ENCODE measurements at regions of chr5 and their contacts with region 1.

Region 1: GRCh38 chr5:96807075-96807654 is 580 bp downstream of the ERAP1 start:
- DNase-seq: no peak
- H3K4me3 ChIP-seq: peak overlapping the region; percentile 68
- H3K4me3 Mint-ChIP-seq: peak overlapping the region; percentile 96 to 99 (median 98)
- H3K27ac ChIP-seq: peak overlapping the region; percentile 93
- H3K27ac Mint-ChIP-seq: peak overlapping the region; percentile 97 to 100 (median 99)
- H3K4me1 ChIP-seq: peaks cover 68% of the 10 kb centered on the region
- H3K4me1 Mint-ChIP-seq: peaks cover 60 to 80% (median 77%) of the 10 kb centered on the region in 3 donors
- H3K27me3 ChIP-seq: no peaks in the 10 kb centered on the region
- H3K27me3 Mint-ChIP-seq: peaks cover 0 to 5% of the 10 kb centered on the region in 2 donors

Region 2: GRCh38 chr5:96565582-96566265 is 241.4 kb before region 1 on chr5:
- CTCF ChIA-PET with region 1: no interaction called
- POLR2A ChIA-PET with region 1: no interaction called
- DNase-seq: no peak
- H3K4me3 ChIP-seq: no peak overlapping the region
- H3K4me3 Mint-ChIP-seq: peak overlapping the region in 2 of 7 donors; percentile 7 to 17
- H3K27ac ChIP-seq: no peak overlapping the region
- H3K27ac Mint-ChIP-seq: peak overlapping the region in 1 of 8 donors; percentile 10
- H3K4me1 ChIP-seq: no peaks in the 10 kb centered on the region
- H3K4me1 Mint-ChIP-seq: peaks cover 13 to 18% (median 18%) of the 10 kb centered on the region in 3 donors
- H3K27me3 ChIP-seq: no peaks in the 10 kb centered on the region
- H3K27me3 Mint-ChIP-seq: peaks cover 0 to 3% of the 10 kb centered on the region in 2 donors

Region 3: DNA sequence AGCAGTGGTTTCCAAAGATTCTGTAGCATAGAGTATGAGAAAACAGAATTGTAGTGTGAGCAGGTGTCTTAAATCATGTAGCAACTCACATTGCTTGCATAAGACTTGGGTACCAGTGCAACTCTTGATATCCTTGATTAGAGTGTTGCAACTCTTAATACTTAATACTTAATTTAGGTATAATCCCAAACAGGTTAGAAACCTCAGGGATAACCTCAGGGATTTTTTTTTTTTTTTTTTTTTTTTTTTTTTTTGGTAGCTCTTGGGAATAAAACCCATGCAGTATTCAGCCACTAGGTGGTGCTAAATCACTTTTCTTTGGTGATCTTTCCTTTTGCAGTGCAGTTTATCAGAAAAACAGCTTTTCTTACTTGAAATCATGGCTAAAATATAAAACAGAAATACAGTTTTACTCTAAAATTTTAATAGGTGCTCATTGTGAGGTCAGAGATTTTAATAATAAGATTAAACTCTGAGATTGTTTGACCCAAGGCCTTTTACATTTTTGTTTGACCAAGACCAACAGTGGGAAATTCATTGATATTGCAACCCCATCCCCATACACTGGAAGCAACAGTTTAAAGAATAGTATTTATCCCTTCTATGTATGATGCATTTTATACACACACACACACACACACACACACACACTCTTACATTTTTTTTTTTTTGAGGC is 54.7 kb before region 1 on chr5:
- CTCF ChIA-PET with region 1: interaction called, 12 read pairs
- POLR2A ChIA-PET with region 1: interaction called, 5 read pairs
- DNase-seq: peak in 3 of 5 donors; percentile 29 to 61 (median 45)
- H3K4me3 ChIP-seq: no peak overlapping the region
- H3K4me3 Mint-ChIP-seq: no peak overlapping the region
- H3K27ac ChIP-seq: no peak overlapping the region
- H3K27ac Mint-ChIP-seq: peak overlapping the region in 3 of 8 donors; percentile 6 to 80 (median 15)
- H3K4me1 ChIP-seq: no peaks in the 10 kb centered on the region
- H3K4me1 Mint-ChIP-seq: peaks cover 0 to 5% (median 4%) of the 10 kb centered on the region in 3 donors
- H3K27me3 ChIP-seq: no peaks in the 10 kb centered on the region
- H3K27me3 Mint-ChIP-seq: no peaks in the 10 kb centered on the region

Region 4: DNA sequence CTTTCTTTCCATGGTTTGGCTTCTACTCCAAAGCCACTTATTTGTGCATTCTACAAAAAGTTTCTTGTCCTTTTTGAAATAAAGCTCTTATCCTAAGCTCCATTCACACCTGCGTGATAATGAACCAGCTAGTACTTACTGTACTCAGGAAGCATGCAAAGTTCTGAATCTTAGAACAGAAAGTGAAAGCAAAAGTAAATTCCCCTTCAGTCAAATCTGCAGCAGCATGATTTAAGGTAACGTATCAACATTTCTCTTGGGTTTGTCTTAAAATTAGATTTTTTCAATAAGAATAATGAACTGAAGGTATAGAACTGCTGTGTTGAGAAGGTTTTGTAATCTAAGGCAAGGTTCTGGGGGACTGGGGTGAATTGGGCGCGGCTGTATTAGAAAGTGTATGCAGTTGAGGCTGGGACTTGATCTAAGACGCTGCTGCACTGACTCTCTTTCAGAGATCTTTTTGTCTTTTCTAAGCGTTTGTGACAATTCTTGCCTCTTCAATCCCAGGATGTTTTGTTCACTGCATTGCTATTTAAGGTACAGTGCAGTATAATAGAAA is 69.2 kb after region 1 on chr5 and contains the start of gene ERAP2:
- CTCF ChIA-PET with region 1: interaction called, 5 read pairs
- POLR2A ChIA-PET with region 1: interaction called, 19 read pairs
- DNase-seq: peak in 2 of 5 donors; percentile 60 to 67
- H3K4me3 ChIP-seq: peak within 1 kb of the TSS; percentile 74
- H3K4me3 Mint-ChIP-seq: peak within 1 kb of the TSS; percentile 87 to 97 (median 94)
- H3K27ac ChIP-seq: peak within 1 kb of the TSS; percentile 72
- H3K27ac Mint-ChIP-seq: peak within 1 kb of the TSS; percentile 89 to 99 (median 97)
- H3K4me1 ChIP-seq: peaks cover 57% of the 10 kb centered on the region
- H3K4me1 Mint-ChIP-seq: peaks cover 47 to 75% (median 62%) of the 10 kb centered on the region in 3 donors
- H3K27me3 ChIP-seq: no peaks in the 10 kb centered on the region
- H3K27me3 Mint-ChIP-seq: no peaks in the 10 kb centered on the region
- total RNA-seq, gene ERAP2: 37.0 to 41.4 TPM

Region 5: GRCh38 chr5:96934708-96935558 is 127.8 kb after region 1 on chr5:
- CTCF ChIA-PET with region 1: interaction called, 4 read pairs
- POLR2A ChIA-PET with region 1: interaction called, 10 read pairs
- DNase-seq: peak; percentile 87 to 99 (median 96)
- H3K4me3 ChIP-seq: peak overlapping the region; percentile 89
- H3K4me3 Mint-ChIP-seq: peak overlapping the region; percentile 82 to 94 (median 91)
- H3K27ac ChIP-seq: peak overlapping the region; percentile 81
- H3K27ac Mint-ChIP-seq: peak overlapping the region; percentile 85 to 100 (median 96)
- H3K4me1 ChIP-seq: peaks cover 67% of the 10 kb centered on the region
- H3K4me1 Mint-ChIP-seq: peaks cover 66 to 75% (median 75%) of the 10 kb centered on the region in 3 donors
- H3K27me3 ChIP-seq: no peaks in the 10 kb centered on the region
- H3K27me3 Mint-ChIP-seq: peaks cover 0 to 3% of the 10 kb centered on the region in 2 donors

Measured in CD8-positive, alpha-beta memory T cell (primary cell).